Heart right ventricle (tissue), 16 donors: ENCODE measurements at regions of chr12 and their contacts with region 1.

Region 1: DNA sequence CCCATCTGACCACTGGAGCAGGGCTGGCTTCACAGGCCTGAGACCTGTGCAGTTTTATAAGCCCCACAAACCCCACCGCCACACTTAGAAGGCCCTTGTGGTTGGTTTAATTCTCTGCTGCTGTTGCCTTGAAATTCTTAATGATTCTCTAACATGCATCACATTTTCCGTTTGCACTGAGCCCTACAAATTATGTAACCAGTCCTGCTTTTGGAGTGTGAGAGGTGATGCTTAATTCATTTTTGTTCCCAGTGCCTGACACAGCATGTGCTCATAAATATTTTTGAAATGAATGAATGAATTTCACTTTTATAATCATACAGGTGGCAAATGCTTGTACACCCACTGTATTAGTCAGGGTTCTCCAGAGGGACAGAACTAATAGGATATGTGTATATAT is 52.8 kb upstream of the PLXNC1 start:
- DNase-seq: no peak
- ATAC-seq: no peak
- H3K4me3 ChIP-seq: no peak overlapping the region
- H3K27ac ChIP-seq: peak overlapping the region in 1 of 10 donors; percentile 36
- H3K4me1 ChIP-seq: peaks cover 0 to 9% (median 0%) of the 10 kb centered on the region in 9 donors
- H3K27me3 ChIP-seq: peaks cover 0 to 13% (median 0%) of the 10 kb centered on the region in 7 donors
- CTCF ChIP-seq: no peak

Region 2: GRCh38 chr12:94080348-94081009 is 15.1 kb before region 1 on chr12:
- intact Hi-C with region 1: loop called in 1 of 10 experiments (anchors 2 kb)
- DNase-seq: no peak
- ATAC-seq: no peak
- H3K4me3 ChIP-seq: no peak overlapping the region
- H3K27ac ChIP-seq: peak overlapping the region in 2 of 10 donors; percentile 8 to 24
- H3K4me1 ChIP-seq: peaks cover 0 to 18% (median 5%) of the 10 kb centered on the region in 9 donors
- H3K27me3 ChIP-seq: no peaks in the 10 kb centered on the region
- CTCF ChIP-seq: no peak